ENCODE measurements at regions of chr1 and their contacts with region 1.

Region 1: GRCh38 chr1:64864018-64864940 is 102.1 kb downstream of the JAK1 start:
- DNase-seq: peak; percentile 58
- ATAC-seq: peak; percentile 93
- H3K4me3 Mint-ChIP-seq: peak overlapping the region; percentile 69
- H3K27ac Mint-ChIP-seq: peak overlapping the region; percentile 89
- H3K4me1 Mint-ChIP-seq: peaks cover 73% of the 10 kb centered on the region
- H3K27me3 Mint-ChIP-seq: no peaks in the 10 kb centered on the region
- CTCF ChIP-seq: no peak

Region 2: DNA sequence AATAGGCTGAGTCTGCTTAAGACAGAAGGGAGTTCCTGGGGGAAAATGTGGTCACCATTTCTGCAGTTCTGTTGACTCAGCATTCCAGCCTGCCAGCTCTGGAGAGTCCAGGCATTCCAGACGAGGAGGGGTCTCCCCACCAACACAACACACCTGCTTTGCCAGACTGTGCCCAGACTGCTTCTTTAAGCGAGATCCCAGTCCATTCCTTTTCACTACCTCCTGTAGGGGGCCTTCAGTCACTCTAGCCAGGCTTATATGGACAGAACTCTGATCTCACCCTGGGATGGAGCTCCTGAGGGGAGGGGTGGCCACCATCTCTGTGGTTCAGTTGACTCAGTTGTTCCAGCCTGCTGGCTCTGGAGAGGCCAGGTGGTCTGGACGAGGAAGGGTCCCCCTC is 612.3 kb before region 1 on chr1:
- CTCF ChIA-PET with region 1: no interaction called
- POLR2A ChIA-PET with region 1: no interaction called
- intact Hi-C with region 1: no loop called
- DNase-seq: no peak
- ATAC-seq: no peak
- H3K4me3 Mint-ChIP-seq: no peak overlapping the region
- H3K27ac Mint-ChIP-seq: no peak overlapping the region
- H3K4me1 Mint-ChIP-seq: no peaks in the 10 kb centered on the region
- H3K27me3 Mint-ChIP-seq: peaks cover 26% of the 10 kb centered on the region
- CTCF ChIP-seq: no peak

Region 3: DNA sequence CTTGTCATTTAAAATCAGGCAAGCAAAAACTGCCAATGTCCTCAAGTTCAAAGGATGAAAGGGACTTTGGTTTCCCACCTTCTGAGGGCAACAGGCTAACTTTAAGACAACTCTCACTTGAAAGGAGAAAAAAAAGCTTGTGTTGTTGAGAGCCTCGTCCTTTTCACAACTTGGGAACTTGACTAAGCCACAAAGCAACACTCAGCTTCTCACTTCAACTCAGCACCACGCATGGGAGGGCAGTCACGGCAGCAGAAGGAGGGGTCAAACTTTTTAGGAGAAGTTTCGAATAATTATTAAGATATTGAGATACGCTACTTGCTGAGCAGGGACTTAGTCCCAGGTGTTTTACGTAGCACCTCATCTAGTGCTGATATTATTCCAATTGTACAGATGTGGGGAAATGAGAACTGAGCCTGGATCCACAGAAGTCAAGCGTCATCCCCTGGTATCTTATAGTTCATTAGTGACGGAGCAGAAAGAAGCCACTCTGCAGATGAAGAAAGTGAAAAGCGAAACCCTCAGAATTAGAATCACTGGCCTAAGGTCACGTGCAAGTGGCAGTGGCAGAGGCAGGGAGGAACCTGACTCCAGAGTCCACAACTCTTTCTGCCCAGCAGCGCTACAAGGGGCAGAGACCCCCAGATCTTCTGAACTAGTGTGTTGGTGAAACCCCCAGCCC is 18.4 kb after region 1 on chr1:
- CTCF ChIA-PET with region 1: interaction called, 3 read pairs
- POLR2A ChIA-PET with region 1: interaction called, 3 read pairs
- intact Hi-C with region 1: loop called (anchors 2 kb)
- DNase-seq: no peak
- ATAC-seq: peak; percentile 34
- H3K4me3 Mint-ChIP-seq: no peak overlapping the region
- H3K27ac Mint-ChIP-seq: peak overlapping the region; percentile 72
- H3K4me1 Mint-ChIP-seq: peaks cover 42% of the 10 kb centered on the region
- H3K27me3 Mint-ChIP-seq: no peaks in the 10 kb centered on the region
- CTCF ChIP-seq: no peak

Region 4: DNA sequence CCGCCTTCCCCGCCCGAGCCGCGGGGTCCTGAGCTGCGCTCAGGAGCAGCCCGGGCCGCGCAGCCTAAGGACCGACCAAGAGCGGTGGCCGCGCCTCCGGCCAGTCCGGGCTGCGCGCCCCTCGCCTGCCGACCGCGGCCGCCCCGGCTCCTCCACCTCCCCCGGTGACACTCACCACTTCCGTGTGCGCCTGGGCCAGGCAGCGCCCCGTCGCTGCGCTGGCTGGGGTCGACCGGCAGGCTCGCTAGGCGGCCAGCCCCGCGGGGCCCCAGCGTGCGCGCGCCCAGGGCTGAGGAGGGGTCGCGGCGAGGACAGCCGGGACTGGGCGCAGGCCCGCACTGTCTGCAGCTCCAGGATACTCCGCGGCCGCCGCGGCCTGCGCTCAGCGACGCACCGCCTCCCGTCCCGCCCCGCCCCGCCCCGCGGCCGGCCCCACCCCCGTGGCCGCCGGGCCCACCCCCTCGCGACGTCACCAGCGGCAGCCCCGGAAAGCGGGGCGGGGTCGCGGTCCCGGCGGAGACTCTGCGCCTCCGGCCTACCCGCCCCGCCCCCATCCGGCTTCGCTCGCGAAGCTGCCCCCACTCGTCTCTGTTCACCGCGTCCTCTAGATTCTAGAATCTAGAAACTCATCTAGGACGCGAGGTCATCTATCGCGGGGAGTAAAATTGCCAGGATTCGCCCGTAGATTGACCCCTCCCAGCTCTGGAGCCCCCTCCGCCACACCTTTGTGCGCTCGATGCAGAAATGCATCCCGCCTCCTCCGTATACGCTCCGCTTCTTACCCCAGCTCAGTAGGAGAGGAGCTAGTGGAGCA is 102.1 kb after region 1 on chr1 and contains the start of gene JAK1:
- CTCF ChIA-PET with region 1: interaction called, 4 read pairs
- POLR2A ChIA-PET with region 1: interaction called, 24 read pairs
- intact Hi-C with region 1: loop called (anchors 1 kb)
- DNase-seq: peak; percentile 84
- ATAC-seq: peak; percentile 85
- H3K4me3 Mint-ChIP-seq: peak within 1 kb of the TSS; percentile 93
- H3K27ac Mint-ChIP-seq: peak within 1 kb of the TSS; percentile 92
- H3K4me1 Mint-ChIP-seq: peaks cover 49% of the 10 kb centered on the region
- H3K27me3 Mint-ChIP-seq: no peaks in the 10 kb centered on the region
- CTCF ChIP-seq: no peak
- total RNA-seq, gene JAK1: 195 and 215 TPM in 2 replicates

Region 5: DNA sequence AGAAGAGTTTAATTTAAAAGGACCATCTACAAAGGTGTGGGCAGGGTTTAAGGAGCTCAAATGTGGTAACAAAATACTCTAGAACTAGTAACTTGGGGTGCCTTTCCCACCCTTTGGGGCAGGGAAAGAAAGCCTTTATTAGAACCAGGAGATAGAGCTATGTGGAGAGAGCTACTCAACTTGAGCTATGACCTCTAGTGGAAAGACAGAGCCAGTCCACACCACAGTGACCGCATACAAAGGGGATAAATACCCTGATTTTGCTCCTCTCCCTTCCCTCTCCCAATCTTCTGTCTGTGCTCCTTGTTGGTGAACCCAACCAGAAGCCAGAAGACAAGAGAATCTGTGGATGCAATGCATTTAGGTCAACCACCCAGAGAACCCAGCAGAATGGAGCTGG is 156.5 kb after region 1 on chr1:
- CTCF ChIA-PET with region 1: interaction called, 9 read pairs
- POLR2A ChIA-PET with region 1: no interaction called
- intact Hi-C with region 1: loop called (anchors 5 kb)
- DNase-seq: no peak
- ATAC-seq: no peak
- H3K4me3 Mint-ChIP-seq: no peak overlapping the region
- H3K27ac Mint-ChIP-seq: no peak overlapping the region
- H3K4me1 Mint-ChIP-seq: no peaks in the 10 kb centered on the region
- H3K27me3 Mint-ChIP-seq: no peaks in the 10 kb centered on the region
- CTCF ChIP-seq: no peak

Region 6: DNA sequence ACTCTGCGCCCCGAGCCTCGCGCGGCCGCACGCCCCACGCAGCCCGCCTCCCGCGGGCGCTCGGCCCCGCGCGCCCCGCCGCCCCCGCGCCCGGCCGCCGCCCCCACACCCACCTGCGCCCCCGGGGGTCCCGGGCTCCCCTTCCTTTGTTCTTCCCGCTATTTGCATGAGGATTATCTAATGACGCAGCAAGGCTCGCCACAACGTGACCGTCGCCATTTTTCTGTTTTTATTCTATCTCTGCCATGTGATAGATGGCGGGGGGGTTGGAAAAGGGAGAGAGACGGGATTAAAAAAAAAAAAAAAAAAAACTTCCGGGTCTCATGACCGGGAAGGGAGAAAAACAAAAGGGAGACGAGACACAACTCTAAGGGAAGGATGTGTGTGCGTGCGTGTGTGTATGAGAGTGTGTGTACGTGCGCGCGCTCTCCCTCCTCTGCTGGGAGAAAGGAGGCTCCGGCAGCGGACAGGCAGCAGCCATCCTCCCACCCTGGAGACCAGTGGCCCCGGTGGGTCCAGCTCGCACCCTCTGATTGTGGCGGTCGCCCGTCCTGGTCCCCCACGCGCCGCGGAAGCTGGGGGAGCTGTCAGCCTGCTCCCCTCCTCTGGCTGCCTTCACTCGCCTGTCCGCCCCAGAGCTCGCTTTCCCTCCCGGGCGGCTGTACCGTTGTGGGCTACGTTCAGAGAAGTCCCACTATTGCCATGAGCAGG is 203.4 kb after region 1 on chr1:
- CTCF ChIA-PET with region 1: no interaction called
- POLR2A ChIA-PET with region 1: interaction called, 5 read pairs
- intact Hi-C with region 1: loop called (anchors 1 kb)
- DNase-seq: peak; percentile 50
- ATAC-seq: peak; percentile 15
- H3K4me3 Mint-ChIP-seq: peak overlapping the region; percentile 97
- H3K27ac Mint-ChIP-seq: peak overlapping the region; percentile 99
- H3K4me1 Mint-ChIP-seq: peaks cover 48% of the 10 kb centered on the region
- H3K27me3 Mint-ChIP-seq: no peaks in the 10 kb centered on the region
- CTCF ChIP-seq: no peak